HepG2 (cell line): ENCODE measurements at regions of chr11 and their contacts with region 1.

Region 1: DNA sequence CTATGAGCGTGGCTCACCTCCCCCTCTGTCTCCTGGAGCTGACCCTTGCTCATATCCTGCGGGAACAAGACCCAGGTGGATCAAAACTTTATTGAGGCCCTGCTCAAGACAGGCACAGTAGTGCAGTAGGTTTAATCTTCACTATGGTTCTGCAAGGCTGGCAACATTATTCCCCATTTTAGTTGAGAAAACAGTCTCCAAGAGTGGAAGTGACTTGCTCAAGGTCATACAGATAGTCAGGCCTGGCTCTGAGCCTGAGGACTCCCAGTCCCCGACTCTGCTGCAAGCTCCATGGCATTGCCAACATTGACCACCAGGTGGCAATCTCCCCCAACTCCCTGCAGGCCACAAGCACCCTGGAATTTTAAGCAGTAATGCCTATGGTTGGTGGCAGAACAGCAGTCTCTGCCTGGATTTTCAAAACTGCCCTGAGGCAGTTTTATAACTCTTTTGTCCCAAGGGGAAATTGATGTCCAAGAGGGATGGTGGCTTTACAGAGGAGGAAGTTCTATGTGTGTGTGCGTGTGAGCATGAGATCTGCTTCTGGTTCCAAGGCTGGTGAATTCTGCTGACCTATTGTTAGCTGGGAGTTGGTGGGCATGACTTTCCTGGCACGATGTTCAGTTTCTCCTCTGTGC is 34.1 kb downstream of the NEU3 start:
- DNase-seq: peak; percentile 73
- ATAC-seq: peak; percentile 98
- H3K4me3 ChIP-seq: no peak overlapping the region
- H3K27ac ChIP-seq: no peak overlapping the region
- H3K4me1 ChIP-seq: peaks cover 5% of the 10 kb centered on the region; the same call in 1 of the 2 replicates
- H3K27me3 ChIP-seq: peaks cover 0 to 8% of the 10 kb centered on the region in 2 experiments; a peak in 2 of 5 replicates
- CTCF ChIP-seq: peak; percentile 93
- EP300 ChIP-seq: no peak
- POLR2A ChIP-seq: no peak
- RAD21 ChIP-seq: peak; percentile 84

Region 2: GRCh38 chr11:74966651-74967050 is 56.2 kb before region 1 on chr11:
- CTCF ChIA-PET with region 1: no interaction called
- POLR2A ChIA-PET with region 1: no interaction called
- in situ Hi-C with region 1: no loop called
- intact Hi-C with region 1: no loop called
- DNase-seq: no peak
- ATAC-seq: no peak
- H3K4me3 ChIP-seq: no peak overlapping the region
- H3K27ac ChIP-seq: no peak overlapping the region
- H3K4me1 ChIP-seq: no peaks in the 10 kb centered on the region
- H3K27me3 ChIP-seq: no peaks in the 10 kb centered on the region
- CTCF ChIP-seq: no peak
- EP300 ChIP-seq: no peak
- POLR2A ChIP-seq: no peak
- RAD21 ChIP-seq: no peak

Region 3: GRCh38 chr11:75241036-75241905 is 218.4 kb after region 1 on chr11:
- CTCF ChIA-PET with region 1: interaction called, 12 read pairs
- POLR2A ChIA-PET with region 1: no interaction called
- in situ Hi-C with region 1: loop called (anchors 5 kb)
- intact Hi-C with region 1: no loop called
- DNase-seq: peak; percentile 57
- ATAC-seq: peak; percentile 86
- H3K4me3 ChIP-seq: peak overlapping the region; percentile 46 to 74 (median 46); a peak in 5 of 6 replicates
- H3K27ac ChIP-seq: no peak overlapping the region
- H3K4me1 ChIP-seq: peaks cover 15% of the 10 kb centered on the region; the same call in 1 of the 2 replicates
- H3K27me3 ChIP-seq: peaks cover 15 to 63% of the 10 kb centered on the region in 2 experiments
- CTCF ChIP-seq: peak; percentile 76
- EP300 ChIP-seq: no peak
- POLR2A ChIP-seq: no peak
- RAD21 ChIP-seq: peak; percentile 97

Region 4: GRCh38 chr11:75248690-75249268 is 225.9 kb after region 1 on chr11:
- CTCF ChIA-PET with region 1: interaction called, 62 read pairs
- POLR2A ChIA-PET with region 1: no interaction called
- in situ Hi-C with region 1: loop called (anchors 5 kb)
- intact Hi-C with region 1: loop called (anchors 1 kb)
- DNase-seq: peak; percentile 81
- ATAC-seq: peak; percentile 85
- H3K4me3 ChIP-seq: no peak overlapping the region; a peak in 1 of 6 replicates
- H3K27ac ChIP-seq: no peak overlapping the region
- H3K4me1 ChIP-seq: peaks cover 5% of the 10 kb centered on the region; the same call in 1 of the 2 replicates
- H3K27me3 ChIP-seq: peaks cover 2 to 26% of the 10 kb centered on the region in 2 experiments; a peak in 4 of 5 replicates
- CTCF ChIP-seq: peak; percentile 99
- EP300 ChIP-seq: no peak
- POLR2A ChIP-seq: no peak
- RAD21 ChIP-seq: peak; percentile 95